Activated CD4-positive, alpha-beta T cell treated with anti-CD3 and anti-CD28 coated beads for 36 hours (primary cell): ENCODE measurements at regions of chr19 and their contacts with region 1.

Region 1: DNA sequence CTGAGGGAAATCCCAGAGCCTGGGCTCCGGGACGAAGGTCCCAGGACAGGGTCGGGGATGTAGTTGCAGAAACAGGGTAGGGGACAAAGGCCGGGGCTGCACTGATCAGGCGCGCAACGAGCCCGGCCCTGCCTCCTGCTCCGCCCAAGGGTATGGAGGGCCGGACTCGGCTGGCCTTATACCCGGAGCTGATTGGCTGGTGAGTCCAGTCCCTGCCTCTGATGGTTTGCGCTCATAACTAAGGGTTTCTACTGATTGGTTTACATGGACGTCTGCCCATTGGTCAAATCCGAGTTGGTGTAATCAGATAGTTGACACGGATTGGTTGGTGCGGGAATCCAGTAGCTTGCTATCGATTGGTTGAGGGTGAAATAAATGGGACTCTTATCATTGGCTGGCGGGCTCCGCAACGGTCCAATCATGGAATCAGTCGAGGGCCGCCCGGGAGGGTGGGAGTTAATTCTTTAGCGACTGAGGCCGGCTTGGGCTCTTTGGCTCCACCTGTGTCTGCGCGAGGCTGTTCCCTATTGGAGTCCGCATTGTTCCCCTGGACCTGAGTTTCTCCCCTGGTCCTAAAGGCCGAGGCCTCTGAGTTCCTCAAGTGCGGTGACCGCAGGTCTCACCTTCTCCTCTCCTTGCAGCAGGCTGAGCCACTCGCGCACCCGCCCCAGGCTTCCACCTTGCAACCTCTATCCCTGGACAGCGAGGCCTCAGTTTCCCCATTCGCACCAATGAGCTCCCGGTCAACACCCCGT is 570 bp upstream of the MPND start:
- DNase-seq: peak; percentile 97
- ATAC-seq: peak; percentile 91
- H3K4me3 Mint-ChIP-seq: peak overlapping the region; percentile 89
- H3K27ac Mint-ChIP-seq: peak overlapping the region; percentile 93
- H3K4me1 Mint-ChIP-seq: peaks cover 17% of the 10 kb centered on the region
- H3K27me3 Mint-ChIP-seq: no peaks in the 10 kb centered on the region

Region 2: GRCh38 chr19:4123615-4124568 is 218.9 kb before region 1 on chr19 and contains the start of gene MAP2K2:
- CTCF ChIA-PET with region 1: no interaction called
- POLR2A ChIA-PET with region 1: no interaction called
- intact Hi-C with region 1: loop called in 1 of 2 experiments (anchors 1 kb)
- DNase-seq: peak; percentile 98
- ATAC-seq: peak; percentile 96
- H3K4me3 Mint-ChIP-seq: peak within 1 kb of the TSS; percentile 97
- H3K27ac Mint-ChIP-seq: peak within 1 kb of the TSS; percentile 92
- H3K4me1 Mint-ChIP-seq: peaks cover 18% of the 10 kb centered on the region
- H3K27me3 Mint-ChIP-seq: no peaks in the 10 kb centered on the region
- total RNA-seq, gene MAP2K2: 108 to 133 TPM

Region 3: DNA sequence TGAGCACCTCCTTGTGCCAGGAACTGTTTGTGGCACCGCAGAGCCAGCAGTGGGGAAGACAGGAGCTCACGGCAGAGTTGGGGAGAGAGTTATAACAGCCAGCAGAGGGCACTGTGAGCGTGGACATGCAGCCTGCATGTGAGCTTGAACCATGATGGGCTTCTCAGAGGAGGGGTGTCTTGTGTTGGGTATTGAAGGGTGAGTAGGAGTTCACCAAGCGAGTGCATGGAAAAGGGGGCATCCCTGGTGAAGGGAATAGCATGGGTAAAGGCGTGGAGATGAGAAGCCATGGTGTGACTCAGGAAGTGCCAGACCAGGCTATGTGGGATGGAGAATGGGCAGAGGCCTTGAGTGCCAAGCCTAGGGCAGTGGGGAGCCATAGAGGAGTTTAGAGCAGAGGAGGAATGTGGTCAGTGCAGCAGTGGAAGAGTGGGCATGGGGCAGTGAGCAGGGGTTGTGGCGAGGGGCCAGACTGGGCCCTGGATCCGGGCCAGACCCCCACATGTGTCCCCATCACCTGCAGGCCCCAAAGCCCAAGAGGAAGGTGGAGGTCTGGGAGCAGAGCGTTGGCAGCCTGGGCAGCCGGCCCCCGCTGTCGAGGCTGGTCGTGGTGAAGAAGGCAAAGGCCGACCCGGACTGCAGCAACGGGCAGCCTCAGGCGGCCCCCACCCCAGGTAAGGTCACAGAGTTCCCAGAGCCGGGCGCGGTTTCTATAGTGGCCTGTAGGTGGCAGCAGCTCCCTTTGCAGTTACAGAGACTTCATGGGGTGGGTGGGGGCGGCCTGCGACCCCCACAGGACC is 75.5 kb before region 1 on chr19:
- CTCF ChIA-PET with region 1: interaction called, 26 read pairs
- POLR2A ChIA-PET with region 1: interaction called, 9 read pairs
- intact Hi-C with region 1: no loop called
- DNase-seq: peak; percentile 83
- ATAC-seq: peak; percentile 81
- H3K4me3 Mint-ChIP-seq: no peak overlapping the region
- H3K27ac Mint-ChIP-seq: peak overlapping the region; percentile 9
- H3K4me1 Mint-ChIP-seq: peaks cover 14% of the 10 kb centered on the region
- H3K27me3 Mint-ChIP-seq: no peaks in the 10 kb centered on the region

Region 4: DNA sequence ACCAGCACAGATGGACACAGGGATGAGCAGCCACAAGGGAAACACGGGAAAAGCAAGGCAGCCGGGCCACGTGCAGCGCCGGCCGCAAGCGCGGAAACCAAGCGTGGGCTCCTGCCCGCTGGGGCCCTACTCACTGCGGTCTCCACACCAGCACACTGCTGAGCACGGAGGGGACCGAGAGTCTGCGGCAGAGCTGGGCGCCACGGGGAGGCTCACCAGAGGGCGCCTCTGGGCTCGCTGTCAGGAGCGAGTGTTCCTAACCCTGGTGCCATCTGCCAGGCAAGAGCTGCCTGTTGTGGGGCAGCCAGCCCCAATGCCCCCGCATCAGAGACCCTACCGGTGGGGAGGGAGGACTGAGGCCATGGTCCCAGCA is 27.1 kb after region 1 on chr19:
- CTCF ChIA-PET with region 1: no interaction called
- POLR2A ChIA-PET with region 1: no interaction called
- intact Hi-C with region 1: loop called in 1 of 2 experiments (anchors 1 kb)
- DNase-seq: peak; percentile 91
- ATAC-seq: peak; percentile 79
- H3K4me3 Mint-ChIP-seq: peak overlapping the region; percentile 63
- H3K27ac Mint-ChIP-seq: peak overlapping the region; percentile 93
- H3K4me1 Mint-ChIP-seq: peaks cover 40% of the 10 kb centered on the region
- H3K27me3 Mint-ChIP-seq: no peaks in the 10 kb centered on the region

Region 5: DNA sequence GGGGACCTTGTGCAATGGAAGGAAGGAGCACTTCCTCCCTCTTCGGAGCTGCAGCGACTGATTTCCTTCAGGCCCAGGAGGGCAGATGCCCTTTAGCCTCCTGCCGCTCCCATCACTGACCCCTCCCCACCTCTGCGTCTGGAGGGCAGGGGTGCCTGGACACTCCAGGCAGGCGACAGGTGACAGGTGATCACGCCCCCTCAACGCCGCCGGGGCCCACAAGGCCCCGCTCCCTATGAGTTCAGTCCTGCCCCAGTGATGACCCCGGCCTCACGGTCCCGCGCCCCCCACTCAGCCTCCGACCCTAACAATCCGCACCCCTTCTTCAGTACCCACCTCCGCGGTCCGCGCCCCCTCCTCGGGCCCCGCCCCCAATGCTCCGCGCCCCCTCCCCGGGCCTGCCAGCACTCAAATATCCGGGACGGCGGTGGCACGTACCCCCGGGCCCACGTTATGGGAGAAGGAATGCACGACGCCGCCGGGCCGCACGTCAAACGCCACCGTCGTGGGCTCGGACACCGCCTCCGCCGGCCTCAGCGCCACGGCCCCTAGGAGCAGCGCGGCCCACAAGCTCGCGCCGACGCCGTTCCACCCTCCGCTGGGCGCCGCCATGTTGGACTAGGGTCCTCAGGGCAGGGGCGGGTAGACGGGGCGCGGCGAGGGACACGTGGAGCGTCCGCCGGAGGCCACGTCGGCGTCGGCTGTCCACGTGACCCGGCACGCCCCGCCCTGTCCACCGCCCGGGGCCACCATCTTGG is 327.1 kb after region 1 on chr19 and contains the start of gene MYDGF:
- CTCF ChIA-PET with region 1: no interaction called
- POLR2A ChIA-PET with region 1: no interaction called
- intact Hi-C with region 1: loop called in 1 of 2 experiments (anchors 2 kb)
- DNase-seq: peak; percentile 97
- ATAC-seq: peak; percentile 99
- H3K4me3 Mint-ChIP-seq: peak within 1 kb of the TSS; percentile 85
- H3K27ac Mint-ChIP-seq: peak within 1 kb of the TSS; percentile 75
- H3K4me1 Mint-ChIP-seq: peaks cover 18% of the 10 kb centered on the region
- H3K27me3 Mint-ChIP-seq: no peaks in the 10 kb centered on the region
- total RNA-seq, gene MYDGF: 34.7 to 53.8 TPM